ENCODE measurements at regions of chr5 and their contacts with region 1.

Region 1: GRCh38 chr5:169577951-169578350 is 5.6 kb upstream of the SPDL1 start:
- DNase-seq: no peak
- ATAC-seq: peak; percentile 30; the same call in 2 of the 3 replicates
- H3K4me3 ChIP-seq: no peak overlapping the region
- H3K27ac ChIP-seq: no peak overlapping the region
- H3K4me1 ChIP-seq: no peaks in the 10 kb centered on the region; the same call in 1 of the 2 replicates
- H3K27me3 ChIP-seq: peaks cover 0 to 3% of the 10 kb centered on the region in 2 experiments; a peak in 1 of 4 replicates
- CTCF ChIP-seq: peak; percentile 39 to 62 (median 43); a peak in 5 of 6 replicates
- EP300 ChIP-seq: no peak
- POLR2A ChIP-seq: no peak
- RAD21 ChIP-seq: peak; percentile 75

Region 2: DNA sequence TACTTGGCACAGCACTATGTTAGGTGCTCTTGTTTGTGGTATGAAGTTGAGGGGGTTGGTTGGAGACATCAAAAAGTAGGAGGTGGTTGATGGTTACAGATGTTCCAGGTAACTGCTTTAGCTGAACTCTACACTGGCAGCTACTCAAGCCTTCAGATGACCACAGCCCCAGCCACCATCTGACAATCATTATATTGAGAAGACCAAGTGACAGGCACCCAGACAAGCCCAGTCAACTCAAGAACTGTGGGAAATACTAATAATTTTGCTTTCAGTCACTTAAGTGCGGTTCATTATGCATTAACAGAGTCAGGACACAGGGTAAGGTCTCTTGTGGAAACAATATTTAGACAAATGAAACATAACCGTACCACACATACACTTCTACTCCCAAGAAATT is 238.1 kb before region 1 on chr5:
- CTCF ChIA-PET with region 1: no interaction called
- POLR2A ChIA-PET with region 1: no interaction called
- RAD21 ChIA-PET with region 1: no interaction called
- SMC1A ChIA-PET with region 1: no interaction called
- in situ Hi-C with region 1: no loop called
- intact Hi-C with region 1: loop called (anchors 10 kb)
- DNase-seq: peak; percentile 8
- ATAC-seq: peak; percentile 20
- H3K4me3 ChIP-seq: no peak overlapping the region
- H3K27ac ChIP-seq: no peak overlapping the region
- H3K4me1 ChIP-seq: no peaks in the 10 kb centered on the region
- H3K27me3 ChIP-seq: 0 out of 4 replicates have a peak, but pooled peaks cover 2% of the 10 kb centered on the region in 2 experiments
- CTCF ChIP-seq: no peak
- EP300 ChIP-seq: no peak
- POLR2A ChIP-seq: no peak
- RAD21 ChIP-seq: no peak

Region 3: GRCh38 chr5:169554251-169554650 is 23.7 kb before region 1 on chr5:
- CTCF ChIA-PET with region 1: no interaction called
- POLR2A ChIA-PET with region 1: no interaction called
- RAD21 ChIA-PET with region 1: no interaction called
- SMC1A ChIA-PET with region 1: no interaction called
- in situ Hi-C with region 1: no loop called
- intact Hi-C with region 1: no loop called
- DNase-seq: no peak
- ATAC-seq: peak; percentile 76
- H3K4me3 ChIP-seq: no peak overlapping the region
- H3K27ac ChIP-seq: no peak overlapping the region
- H3K4me1 ChIP-seq: no peaks in the 10 kb centered on the region
- H3K27me3 ChIP-seq: peaks cover 1 to 3% of the 10 kb centered on the region in 2 experiments; a peak in 1 of 4 replicates
- CTCF ChIP-seq: no peak
- EP300 ChIP-seq: no peak
- POLR2A ChIP-seq: no peak
- RAD21 ChIP-seq: no peak

Region 4: GRCh38 chr5:170006021-170006420 is 428.1 kb after region 1 on chr5:
- CTCF ChIA-PET with region 1: no interaction called
- POLR2A ChIA-PET with region 1: no interaction called
- RAD21 ChIA-PET with region 1: no interaction called
- SMC1A ChIA-PET with region 1: no interaction called
- in situ Hi-C with region 1: no loop called
- intact Hi-C with region 1: no loop called
- DNase-seq: no peak
- ATAC-seq: no peak
- H3K4me3 ChIP-seq: no peak overlapping the region
- H3K27ac ChIP-seq: no peak overlapping the region
- H3K4me1 ChIP-seq: no peaks in the 10 kb centered on the region
- H3K27me3 ChIP-seq: no peaks in the 10 kb centered on the region
- CTCF ChIP-seq: no peak
- EP300 ChIP-seq: no peak
- POLR2A ChIP-seq: no peak
- RAD21 ChIP-seq: no peak

Measured in GM12878 (cell line).